ENCODE measurements at regions of chr12 and their contacts with region 1.

Region 1: DNA sequence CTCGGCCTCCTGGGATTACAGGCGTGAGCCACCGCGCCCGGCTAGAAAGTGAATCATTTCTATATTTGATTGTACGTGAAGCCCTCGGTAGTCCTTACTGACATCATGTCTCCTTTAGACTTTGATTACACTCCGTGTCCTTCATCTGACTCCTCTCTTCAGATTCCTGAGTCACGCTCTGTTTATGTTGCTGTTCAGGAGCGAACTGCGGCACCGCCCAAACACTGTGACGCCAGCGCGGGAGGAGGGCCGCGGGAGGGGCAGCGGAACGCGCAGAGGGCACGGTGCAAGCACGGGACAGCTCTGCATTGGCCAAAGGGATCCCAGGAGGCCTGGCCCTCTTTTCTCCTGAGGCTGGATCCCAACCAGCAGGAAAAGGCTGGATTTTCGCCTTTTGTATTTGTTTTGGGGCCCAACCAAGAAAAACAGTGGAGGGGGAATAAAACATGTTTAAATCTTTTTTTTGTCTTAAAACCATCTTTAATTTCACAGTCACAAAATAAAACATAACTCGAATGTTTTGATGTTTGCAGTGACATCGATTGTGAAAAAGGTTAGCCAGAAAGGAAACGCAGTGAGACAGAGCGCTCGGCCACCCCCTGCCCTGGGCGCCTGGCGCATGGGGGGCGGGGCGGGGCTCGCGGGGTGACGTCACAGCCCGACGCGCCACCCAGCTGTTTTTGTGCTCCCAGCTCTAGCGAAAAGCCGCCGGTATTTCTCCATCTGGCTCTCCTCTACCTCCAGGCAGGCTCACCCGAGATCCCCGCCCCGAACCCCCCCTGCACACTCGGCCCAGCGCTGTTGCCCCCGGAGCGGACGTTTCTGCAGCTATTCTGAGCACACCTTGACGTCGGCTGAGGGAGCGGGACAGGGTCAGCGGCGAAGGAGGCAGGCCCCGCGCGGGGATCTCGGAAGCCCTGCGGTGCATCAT is at the start of gene GABARAPL1:
- DNase-seq: peak; percentile 98
- H3K4me3 Mint-ChIP-seq: peak within 1 kb of the TSS; percentile 88
- H3K27ac Mint-ChIP-seq: peak within 1 kb of the TSS; percentile 99
- H3K4me1 Mint-ChIP-seq: peaks cover 21% of the 10 kb centered on the region
- H3K27me3 Mint-ChIP-seq: no peaks in the 10 kb centered on the region
- CTCF ChIP-seq: no peak
- total RNA-seq, gene GABARAPL1: 19.7 and 28.1 TPM in 2 replicates

Region 2: DNA sequence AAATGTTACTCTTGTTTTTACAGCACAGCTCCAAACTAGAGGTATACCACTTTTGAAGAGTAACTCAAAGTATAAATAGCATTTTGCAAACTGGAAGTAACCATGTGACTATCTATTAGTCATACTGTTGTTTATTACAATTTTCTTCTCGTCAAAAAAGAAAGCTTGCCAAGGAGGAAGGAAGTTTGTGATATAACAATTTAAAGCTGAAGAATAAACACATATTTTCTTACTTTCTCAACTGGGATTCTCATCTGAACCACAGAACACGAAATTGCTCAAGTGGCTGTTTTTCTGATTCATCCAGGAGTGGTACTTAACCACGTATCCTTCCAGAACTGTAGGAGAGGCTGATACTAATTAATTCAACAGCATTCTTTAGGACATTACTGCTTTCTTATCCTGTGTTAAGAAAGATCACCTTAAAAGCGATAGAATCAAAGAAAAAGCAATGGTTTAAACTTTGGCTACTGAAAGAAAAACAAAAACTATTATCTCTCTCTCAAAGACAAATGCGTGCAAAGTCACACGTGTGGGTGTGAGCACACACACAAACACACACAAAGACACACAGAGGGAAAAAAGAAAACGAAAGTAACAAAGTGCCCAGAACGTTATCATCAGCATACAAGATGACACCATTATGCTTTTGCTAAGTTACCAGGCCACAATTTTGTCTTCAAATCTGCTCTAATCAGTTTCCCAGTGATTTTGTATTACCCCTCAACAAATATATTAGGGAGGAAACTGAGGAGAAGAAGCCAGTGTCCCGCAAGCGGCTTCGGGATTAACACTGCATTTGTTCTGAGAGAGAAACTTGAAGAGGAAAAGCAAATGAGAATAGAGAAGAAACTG is 342.9 kb before region 1 on chr12 and contains the start of gene CLEC2B:
- CTCF ChIA-PET with region 1: no interaction called
- POLR2A ChIA-PET with region 1: interaction called, 4 read pairs
- intact Hi-C with region 1: loop called (anchors 10 kb)
- DNase-seq: peak; percentile 88
- H3K4me3 Mint-ChIP-seq: peak within 1 kb of the TSS; percentile 90
- H3K27ac Mint-ChIP-seq: peak within 1 kb of the TSS; percentile 100
- H3K4me1 Mint-ChIP-seq: peaks cover 51% of the 10 kb centered on the region
- H3K27me3 Mint-ChIP-seq: no peaks in the 10 kb centered on the region
- CTCF ChIP-seq: no peak
- total RNA-seq, gene CLEC2B: 1.8 and 2.2 TPM in 2 replicates

Region 3: DNA sequence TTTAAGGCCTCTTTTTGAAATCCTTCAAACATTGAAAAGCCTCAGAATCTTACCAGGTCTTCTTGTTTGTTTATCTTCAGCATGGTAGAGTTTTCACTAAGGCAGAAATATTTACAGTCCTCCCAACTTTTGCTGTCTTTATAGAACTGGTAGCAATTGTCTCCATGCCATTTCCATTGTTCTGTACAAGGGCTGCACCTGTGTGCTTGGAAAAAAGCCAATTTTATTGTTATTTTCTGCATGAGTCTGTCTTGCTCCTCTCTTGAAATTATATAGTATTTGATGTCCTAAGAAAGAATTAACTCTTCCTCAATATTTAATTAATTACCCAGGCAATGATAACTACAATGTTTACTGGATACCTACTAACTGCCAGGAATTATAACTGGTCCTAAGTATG is 137.0 kb before region 1 on chr12:
- CTCF ChIA-PET with region 1: no interaction called
- POLR2A ChIA-PET with region 1: no interaction called
- intact Hi-C with region 1: no loop called
- DNase-seq: no peak
- H3K4me3 Mint-ChIP-seq: no peak overlapping the region
- H3K27ac Mint-ChIP-seq: no peak overlapping the region
- H3K4me1 Mint-ChIP-seq: no peaks in the 10 kb centered on the region
- H3K27me3 Mint-ChIP-seq: no peaks in the 10 kb centered on the region
- CTCF ChIP-seq: no peak

Region 4: DNA sequence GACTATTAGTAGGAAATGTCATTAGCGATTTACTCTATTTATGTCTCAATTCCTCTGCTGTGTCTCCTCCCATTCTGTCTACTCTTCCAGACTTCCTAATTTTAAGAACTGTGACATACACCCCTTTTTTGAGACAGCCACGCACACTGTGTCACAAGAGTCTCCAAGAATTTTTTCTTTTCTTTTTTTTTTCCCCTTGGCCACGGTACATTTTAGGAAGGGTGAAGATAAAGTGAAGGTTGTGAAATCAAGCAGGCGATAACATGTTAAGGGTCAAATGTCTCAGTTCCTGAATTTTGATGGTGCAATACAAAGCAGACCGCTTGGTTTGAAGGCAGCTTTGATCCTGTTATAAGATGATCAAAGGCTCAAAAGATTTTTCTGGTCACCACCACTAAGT is 44.9 kb before region 1 on chr12:
- CTCF ChIA-PET with region 1: interaction called, 3 read pairs
- POLR2A ChIA-PET with region 1: interaction called, 11 read pairs
- intact Hi-C with region 1: no loop called
- DNase-seq: peak; percentile 72
- H3K4me3 Mint-ChIP-seq: no peak overlapping the region
- H3K27ac Mint-ChIP-seq: no peak overlapping the region
- H3K4me1 Mint-ChIP-seq: peaks cover 26% of the 10 kb centered on the region
- H3K27me3 Mint-ChIP-seq: no peaks in the 10 kb centered on the region
- CTCF ChIP-seq: no peak

Region 5: GRCh38 chr12:10227648-10228047 is 15.2 kb after region 1 on chr12:
- CTCF ChIA-PET with region 1: interaction called, 3 read pairs
- POLR2A ChIA-PET with region 1: interaction called, 15 read pairs
- intact Hi-C with region 1: no loop called
- DNase-seq: no peak
- H3K4me3 Mint-ChIP-seq: no peak overlapping the region
- H3K27ac Mint-ChIP-seq: no peak overlapping the region
- H3K4me1 Mint-ChIP-seq: no peaks in the 10 kb centered on the region
- H3K27me3 Mint-ChIP-seq: no peaks in the 10 kb centered on the region
- CTCF ChIP-seq: no peak

Region 6: GRCh38 chr12:10716704-10717315 is 504.3 kb after region 1 on chr12:
- CTCF ChIA-PET with region 1: no interaction called
- POLR2A ChIA-PET with region 1: interaction called, 33 read pairs
- intact Hi-C with region 1: loop called (anchors 5 kb)
- DNase-seq: peak; percentile 97
- H3K4me3 Mint-ChIP-seq: peak overlapping the region; percentile 99
- H3K27ac Mint-ChIP-seq: peak overlapping the region; percentile 98
- H3K4me1 Mint-ChIP-seq: peaks cover 46% of the 10 kb centered on the region
- H3K27me3 Mint-ChIP-seq: no peaks in the 10 kb centered on the region
- CTCF ChIP-seq: no peak

Measured in MCF 10A (cell line).